Naive thymus-derived CD4-positive, alpha-beta T cell (primary cell): ENCODE measurements at regions of chr1 and their contacts with region 1.

Region 1: DNA sequence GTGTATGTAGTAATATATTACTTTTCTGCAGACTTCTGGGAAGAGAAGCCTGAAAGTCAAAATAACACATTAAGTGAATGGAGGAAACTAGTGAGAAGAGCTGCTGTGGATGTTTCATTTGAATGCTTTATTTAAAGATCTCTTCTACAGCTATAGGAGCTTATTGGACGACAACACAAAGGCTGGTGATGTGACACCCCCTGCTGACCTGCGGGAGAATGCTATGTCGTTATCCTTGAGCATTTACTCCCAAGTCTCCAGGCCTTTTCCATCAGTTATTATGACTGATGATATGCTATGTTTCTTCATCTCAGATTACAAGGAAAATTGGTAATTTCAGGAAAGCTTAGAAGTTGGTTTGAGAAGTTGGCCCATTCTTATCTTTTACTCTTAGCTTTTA is 22.3 kb upstream of the PLA2G4A start:
- DNase-seq: no peak
- ATAC-seq: no peak
- H3K4me3 ChIP-seq: no peak overlapping the region
- H3K4me3 Mint-ChIP-seq: no peak overlapping the region
- H3K27ac ChIP-seq: no peak overlapping the region
- H3K27ac Mint-ChIP-seq: no peak overlapping the region
- H3K4me1 ChIP-seq: no peaks in the 10 kb centered on the region
- H3K4me1 Mint-ChIP-seq: no peaks in the 10 kb centered on the region
- H3K27me3 ChIP-seq: no peaks in the 10 kb centered on the region
- H3K27me3 Mint-ChIP-seq: peaks cover 0 to 6% (median 3%) of the 10 kb centered on the region in 5 donors

Region 2: DNA sequence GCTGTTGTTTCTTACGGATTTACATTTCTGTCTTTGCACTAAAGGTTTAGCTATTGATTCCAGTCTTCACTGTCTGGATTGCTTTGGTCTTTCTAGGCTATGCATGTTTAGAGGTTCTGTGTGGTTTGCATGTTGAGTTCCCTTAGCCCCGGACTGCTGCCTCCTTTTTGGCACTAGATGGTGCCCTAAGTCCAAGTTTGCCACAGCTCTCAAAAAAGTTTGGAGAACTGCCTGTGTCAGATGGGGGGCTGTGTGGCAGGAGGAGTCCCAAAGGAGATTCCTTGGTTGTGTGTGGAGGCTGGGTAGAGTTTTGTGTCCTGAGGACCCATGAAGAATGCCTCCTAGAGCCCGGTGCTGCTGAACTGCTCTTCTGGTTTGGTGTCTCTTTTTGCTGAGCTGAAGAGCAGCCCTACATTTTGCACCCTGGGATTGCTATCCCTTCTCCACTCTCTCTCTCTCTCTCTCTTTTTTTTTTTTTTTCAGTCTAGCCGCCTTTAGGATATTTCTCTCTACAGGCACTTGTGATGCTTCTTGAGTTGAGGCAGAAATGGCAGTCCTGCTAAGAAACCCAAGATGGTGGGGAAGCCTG is 200.6 kb before region 1 on chr1:
- CTCF ChIA-PET with region 1: no interaction called
- POLR2A ChIA-PET with region 1: no interaction called
- intact Hi-C with region 1: loop called in 1 of 2 experiments (anchors 5 kb)
- DNase-seq: peak in 4 of 9 donors; percentile 6 to 36 (median 18)
- ATAC-seq: peak; percentile 54
- H3K4me3 ChIP-seq: no peak overlapping the region
- H3K4me3 Mint-ChIP-seq: no peak overlapping the region
- H3K27ac ChIP-seq: no peak overlapping the region
- H3K27ac Mint-ChIP-seq: no peak overlapping the region
- H3K4me1 ChIP-seq: no peaks in the 10 kb centered on the region
- H3K4me1 Mint-ChIP-seq: no peaks in the 10 kb centered on the region
- H3K27me3 ChIP-seq: no peaks in the 10 kb centered on the region
- H3K27me3 Mint-ChIP-seq: peaks cover 14 to 64% (median 35%) of the 10 kb centered on the region in 5 donors

Region 3: DNA sequence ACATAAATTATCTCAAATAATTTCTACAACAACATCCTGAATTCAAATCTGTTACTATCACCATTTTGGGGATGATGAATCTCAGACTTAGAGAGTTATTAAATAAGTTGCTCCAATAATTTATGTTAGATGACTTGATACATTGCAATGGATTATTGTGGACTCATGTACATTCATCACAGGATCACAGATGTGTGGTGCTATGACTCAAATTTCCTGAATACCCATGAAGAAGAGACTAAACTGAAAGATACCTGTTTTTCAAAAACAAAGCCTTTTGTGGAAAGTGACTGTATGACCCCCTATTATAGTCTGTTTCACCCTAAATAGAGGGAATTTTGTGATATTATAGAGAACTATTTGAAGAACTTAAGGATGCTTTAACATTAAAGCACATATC is 337.3 kb after region 1 on chr1:
- CTCF ChIA-PET with region 1: no interaction called
- POLR2A ChIA-PET with region 1: no interaction called
- intact Hi-C with region 1: no loop called
- DNase-seq: no peak
- ATAC-seq: no peak
- H3K4me3 ChIP-seq: no peak overlapping the region
- H3K4me3 Mint-ChIP-seq: no peak overlapping the region
- H3K27ac ChIP-seq: no peak overlapping the region
- H3K27ac Mint-ChIP-seq: no peak overlapping the region
- H3K4me1 ChIP-seq: no peaks in the 10 kb centered on the region
- H3K4me1 Mint-ChIP-seq: peaks cover 0 to 8% (median 0%) of the 10 kb centered on the region in 7 donors
- H3K27me3 ChIP-seq: no peaks in the 10 kb centered on the region
- H3K27me3 Mint-ChIP-seq: no peaks in the 10 kb centered on the region